ENCODE measurements at regions of chr20 and their contacts with region 1.

Region 1: DNA sequence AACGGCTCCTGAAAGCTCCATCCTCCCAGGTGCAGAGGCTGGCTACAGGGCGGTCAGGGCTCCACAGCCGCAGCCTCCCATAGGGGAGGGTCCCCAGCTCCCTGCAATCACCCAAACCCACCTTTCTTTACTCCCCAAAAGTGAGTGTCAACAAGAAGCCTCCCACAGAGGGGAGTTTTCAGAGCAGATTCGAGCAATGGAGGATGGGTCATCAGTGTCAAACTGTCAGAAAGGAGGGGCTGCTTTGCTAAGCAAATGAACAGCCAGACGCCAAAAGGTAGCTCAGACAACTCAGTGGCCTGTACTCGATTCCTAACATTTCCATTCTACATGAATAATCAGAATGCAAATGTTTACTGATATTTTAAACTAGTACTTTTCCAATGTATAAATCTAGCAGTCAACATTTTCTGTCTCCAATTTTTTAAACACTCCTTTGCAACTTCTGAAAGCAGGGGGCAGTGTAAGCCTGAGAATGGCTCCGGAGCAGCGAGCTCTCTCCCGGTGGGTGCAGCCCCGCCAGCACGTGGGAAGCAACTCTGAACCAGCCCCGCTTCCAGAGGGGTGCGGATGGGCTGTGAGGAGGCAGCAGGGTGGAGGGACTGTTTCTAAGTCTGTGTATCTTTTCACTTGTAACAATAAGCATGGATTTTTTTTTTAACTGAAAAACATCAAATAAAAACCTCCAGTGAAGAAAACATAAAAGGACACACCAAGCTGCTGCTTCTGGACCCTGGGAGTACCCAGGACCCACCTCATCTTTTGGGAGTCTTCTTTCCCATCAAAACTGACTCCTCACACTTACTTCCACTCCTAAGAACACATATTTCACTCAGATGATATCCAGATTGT is 54.9 kb downstream of the TAF4 start:
- DNase-seq: peak; percentile 71
- H3K4me3 Mint-ChIP-seq: no peak overlapping the region
- H3K27ac Mint-ChIP-seq: no peak overlapping the region
- H3K4me1 Mint-ChIP-seq: peaks cover 7% of the 10 kb centered on the region
- H3K27me3 Mint-ChIP-seq: no peaks in the 10 kb centered on the region

Region 2: DNA sequence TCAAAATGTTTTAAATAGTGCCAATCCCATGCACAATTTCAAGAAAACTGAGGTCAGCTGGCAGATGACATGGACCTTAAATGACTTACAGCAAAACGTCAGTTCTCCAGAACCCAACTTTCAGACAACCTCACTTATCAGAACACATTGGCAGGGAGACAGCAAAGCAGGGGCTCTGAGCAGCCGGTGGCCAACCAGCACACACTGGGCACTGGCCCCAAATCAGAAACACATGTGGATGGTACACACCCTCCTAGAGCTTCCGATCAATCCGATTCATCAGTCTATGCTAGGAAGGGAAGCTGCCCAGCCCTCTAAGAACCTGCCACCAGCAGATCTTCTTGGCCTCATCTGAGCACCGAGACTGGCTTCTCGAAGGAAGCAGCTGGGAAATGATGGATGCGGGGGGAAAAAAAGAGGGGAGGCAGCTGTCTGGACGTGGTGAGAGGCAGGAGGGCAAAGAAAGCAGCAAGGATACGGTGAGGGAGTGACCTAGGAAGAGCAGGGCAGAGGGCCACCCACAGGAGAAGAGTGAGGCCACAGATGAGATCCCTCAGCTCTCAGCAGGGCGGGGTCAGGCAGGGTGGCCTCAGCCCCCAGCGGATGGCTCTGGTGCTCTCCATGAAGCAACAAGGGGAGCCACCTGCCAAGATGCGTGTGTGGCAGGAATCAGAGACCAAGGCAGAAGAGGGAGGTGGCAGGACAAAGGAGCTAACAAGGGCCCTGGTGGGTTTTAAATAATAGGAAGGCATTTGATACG is 22.0 kb after region 1 on chr20:
- CTCF ChIA-PET with region 1: interaction called, 14 read pairs
- POLR2A ChIA-PET with region 1: no interaction called
- intact Hi-C with region 1: no loop called
- DNase-seq: no peak
- H3K4me3 Mint-ChIP-seq: no peak overlapping the region
- H3K27ac Mint-ChIP-seq: peak overlapping the region; percentile 25
- H3K4me1 Mint-ChIP-seq: peaks cover 42% of the 10 kb centered on the region
- H3K27me3 Mint-ChIP-seq: no peaks in the 10 kb centered on the region

Region 3: GRCh38 chr20:62136283-62137091 is 125.7 kb after region 1 on chr20:
- CTCF ChIA-PET with region 1: interaction called, 22 read pairs
- POLR2A ChIA-PET with region 1: no interaction called
- intact Hi-C with region 1: loop called (anchors 1 kb)
- DNase-seq: peak; percentile 76
- H3K4me3 Mint-ChIP-seq: no peak overlapping the region
- H3K27ac Mint-ChIP-seq: peak overlapping the region; percentile 32
- H3K4me1 Mint-ChIP-seq: peaks cover 49% of the 10 kb centered on the region
- H3K27me3 Mint-ChIP-seq: no peaks in the 10 kb centered on the region

Region 4: GRCh38 chr20:62156592-62157386 is 146.0 kb after region 1 on chr20:
- CTCF ChIA-PET with region 1: interaction called, 7 read pairs
- POLR2A ChIA-PET with region 1: no interaction called
- intact Hi-C with region 1: loop called (anchors 1 kb)
- DNase-seq: peak; percentile 81
- H3K4me3 Mint-ChIP-seq: no peak overlapping the region
- H3K27ac Mint-ChIP-seq: no peak overlapping the region
- H3K4me1 Mint-ChIP-seq: peaks cover 25% of the 10 kb centered on the region
- H3K27me3 Mint-ChIP-seq: no peaks in the 10 kb centered on the region

Measured in activated CD4-positive, alpha-beta memory T cell treated with anti-CD3 and anti-CD28 coated beads for 36 hours (primary cell).